Cardiac septum (tissue), 1 donor: ENCODE measurements at regions of chr13 and their contacts with region 1.

Region 1: DNA sequence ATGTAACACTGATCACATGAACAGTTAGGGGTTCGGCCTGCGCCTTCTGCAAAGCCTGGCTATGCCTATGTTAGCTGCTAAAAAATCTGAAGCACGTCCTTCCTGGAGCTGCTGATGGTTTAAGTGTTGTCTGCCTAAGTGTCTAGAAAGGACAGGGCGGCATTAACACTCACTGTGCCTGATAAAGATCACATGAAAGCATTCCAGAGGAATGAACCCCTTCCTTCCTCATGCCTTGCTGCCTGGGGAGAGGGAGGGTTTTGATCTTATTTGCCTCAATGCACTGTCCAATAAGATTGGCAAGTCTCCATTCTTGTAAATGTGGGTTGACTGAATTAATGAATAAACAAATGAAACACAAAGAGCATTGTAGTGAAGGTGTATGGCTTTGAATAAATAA is 5.2 kb downstream of the DOCK9 start:
- DNase-seq: no peak

Region 2: GRCh38 chr13:98141509-98142379 is 830.9 kb before region 1 on chr13:
- intact Hi-C with region 1: no loop called
- DNase-seq: no peak

Region 3: GRCh38 chr13:98910501-98910951 is 62.1 kb before region 1 on chr13:
- intact Hi-C with region 1: loop called (anchors 2 kb)
- DNase-seq: no peak